ENCODE measurements at regions of chr1 and their contacts with region 1.

Region 1: GRCh38 chr1:12124693-12125421 is 41.9 kb upstream of the TNFRSF1B start:
- H3K4me3 ChIP-seq: no peak overlapping the region
- H3K27ac ChIP-seq: no peak overlapping the region
- H3K4me1 ChIP-seq: no peaks in the 10 kb centered on the region
- CTCF ChIP-seq: peak; percentile 91

Region 2: DNA sequence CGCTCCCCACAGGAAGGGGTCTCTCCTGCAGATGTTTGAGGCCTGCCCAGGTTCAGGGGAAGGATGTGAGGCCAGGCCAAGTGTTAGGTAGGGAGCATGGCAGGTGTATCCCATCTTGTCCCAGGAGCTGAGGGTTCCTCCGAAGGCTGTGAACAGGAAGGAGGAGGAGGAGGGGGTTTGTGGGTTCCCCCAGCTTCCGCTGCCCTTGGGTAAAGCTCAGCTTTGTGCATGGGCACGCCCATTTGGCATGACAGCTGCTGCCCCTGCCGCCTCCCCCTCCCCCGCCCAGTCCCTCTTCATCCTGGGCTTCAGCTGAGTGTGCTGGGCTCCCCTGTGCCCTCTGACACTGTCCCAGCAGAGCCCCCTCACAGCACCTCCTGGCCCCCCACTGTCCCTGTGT is 36.2 kb before region 1 on chr1:
- CTCF ChIA-PET with region 1: no interaction called
- POLR2A ChIA-PET with region 1: no interaction called
- H3K4me3 ChIP-seq: no peak overlapping the region
- H3K27ac ChIP-seq: no peak overlapping the region
- H3K4me1 ChIP-seq: no peaks in the 10 kb centered on the region
- CTCF ChIP-seq: no peak

Region 3: GRCh38 chr1:12141128-12141850 is 16.4 kb after region 1 on chr1:
- CTCF ChIA-PET with region 1: interaction called, 22 read pairs
- POLR2A ChIA-PET with region 1: no interaction called
- H3K4me3 ChIP-seq: no peak overlapping the region
- H3K27ac ChIP-seq: no peak overlapping the region
- H3K4me1 ChIP-seq: peaks cover 6% of the 10 kb centered on the region; the same call in 1 of the 2 replicates
- CTCF ChIP-seq: no peak

Region 4: DNA sequence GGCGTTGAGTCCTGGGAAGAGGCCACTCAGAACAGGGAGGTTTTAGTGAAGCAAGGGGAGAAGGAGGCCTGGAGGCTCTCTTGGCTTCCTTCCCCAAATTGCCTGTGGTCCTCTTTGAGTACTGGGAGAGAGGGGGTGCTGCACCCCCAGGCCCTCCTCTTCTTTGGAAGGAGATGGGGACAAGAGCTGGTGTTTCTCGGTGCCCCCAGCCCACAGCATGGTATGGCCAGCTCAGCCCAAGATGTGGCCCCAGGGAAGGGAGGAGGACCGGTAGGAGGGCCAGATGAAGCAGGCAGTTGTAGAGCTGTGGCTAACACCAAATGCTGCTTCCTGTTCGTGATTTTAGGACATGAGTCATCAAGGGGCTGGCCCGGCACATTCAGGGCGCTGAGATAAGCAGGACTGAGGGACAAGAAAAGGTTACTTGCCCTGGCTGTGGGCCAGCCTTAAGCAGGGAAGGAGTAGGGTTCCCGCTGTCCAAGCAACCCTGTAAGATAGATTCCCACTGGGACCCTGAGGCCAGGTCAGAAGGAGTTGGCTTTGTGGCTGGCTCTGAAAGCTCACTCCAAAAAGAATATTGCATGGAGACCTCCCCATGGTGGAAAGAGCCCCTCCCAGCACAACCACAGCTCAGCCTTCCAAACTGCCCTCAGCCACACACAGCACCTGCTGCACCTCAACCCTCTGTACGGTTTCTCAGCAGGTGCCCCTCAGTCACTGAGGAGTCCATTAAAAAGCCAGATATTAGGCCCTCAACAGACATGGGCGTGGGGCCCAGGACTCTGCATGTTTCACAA is 37.0 kb after region 1 on chr1:
- CTCF ChIA-PET with region 1: interaction called, 15 read pairs
- POLR2A ChIA-PET with region 1: no interaction called
- H3K4me3 ChIP-seq: no peak overlapping the region
- H3K27ac ChIP-seq: no peak overlapping the region
- H3K4me1 ChIP-seq: no peaks in the 10 kb centered on the region
- CTCF ChIP-seq: no peak

Region 5: GRCh38 chr1:12196641-12197482 is 72.0 kb after region 1 on chr1:
- CTCF ChIA-PET with region 1: interaction called, 57 read pairs
- POLR2A ChIA-PET with region 1: no interaction called
- H3K4me3 ChIP-seq: no peak overlapping the region
- H3K27ac ChIP-seq: no peak overlapping the region
- H3K4me1 ChIP-seq: no peaks in the 10 kb centered on the region
- CTCF ChIP-seq: peak; percentile 42

Region 6: DNA sequence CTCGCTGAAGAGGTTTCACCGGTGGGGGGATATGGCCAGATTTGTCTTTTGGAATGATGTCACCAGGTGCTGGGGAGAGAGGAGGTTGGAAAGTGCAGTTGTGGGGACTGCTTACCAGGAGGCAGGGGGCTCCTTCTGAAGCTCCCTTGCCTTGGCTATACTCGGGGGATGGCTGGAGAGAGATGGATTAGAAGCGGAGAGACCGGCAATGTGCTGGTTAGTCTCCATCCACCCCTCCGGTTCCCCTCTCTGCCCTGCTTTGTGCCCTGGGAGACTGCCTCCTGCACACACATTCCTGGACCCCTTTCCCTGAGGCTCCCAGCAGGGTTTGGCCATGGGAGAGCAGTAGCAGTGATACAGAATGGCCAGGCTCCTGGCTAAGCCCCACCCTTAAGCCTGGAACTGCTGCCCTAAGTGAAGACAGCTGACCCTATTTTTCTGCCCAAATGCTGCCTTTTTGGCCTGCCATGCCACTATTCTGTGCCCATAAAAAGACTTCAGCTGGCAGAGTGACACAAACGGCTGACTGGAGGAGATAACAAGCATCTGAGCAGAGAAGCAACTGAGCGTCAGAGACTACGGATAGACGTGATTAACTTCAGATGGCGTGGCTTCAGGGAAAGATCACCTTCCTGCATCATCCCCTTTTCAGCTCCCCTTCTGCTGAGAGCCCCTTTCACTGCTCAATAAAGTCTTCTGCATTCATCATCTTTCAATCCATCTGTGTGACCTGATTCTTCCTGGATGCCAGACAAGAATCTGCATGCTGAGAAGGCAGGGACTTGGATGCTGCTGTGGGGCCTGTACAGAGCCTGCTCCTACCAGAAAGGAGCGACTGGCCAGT is 90.5 kb after region 1 on chr1:
- CTCF ChIA-PET with region 1: interaction called, 300 read pairs
- POLR2A ChIA-PET with region 1: no interaction called
- H3K4me3 ChIP-seq: no peak overlapping the region
- H3K27ac ChIP-seq: no peak overlapping the region
- H3K4me1 ChIP-seq: no peaks in the 10 kb centered on the region
- CTCF ChIP-seq: no peak

Region 7: DNA sequence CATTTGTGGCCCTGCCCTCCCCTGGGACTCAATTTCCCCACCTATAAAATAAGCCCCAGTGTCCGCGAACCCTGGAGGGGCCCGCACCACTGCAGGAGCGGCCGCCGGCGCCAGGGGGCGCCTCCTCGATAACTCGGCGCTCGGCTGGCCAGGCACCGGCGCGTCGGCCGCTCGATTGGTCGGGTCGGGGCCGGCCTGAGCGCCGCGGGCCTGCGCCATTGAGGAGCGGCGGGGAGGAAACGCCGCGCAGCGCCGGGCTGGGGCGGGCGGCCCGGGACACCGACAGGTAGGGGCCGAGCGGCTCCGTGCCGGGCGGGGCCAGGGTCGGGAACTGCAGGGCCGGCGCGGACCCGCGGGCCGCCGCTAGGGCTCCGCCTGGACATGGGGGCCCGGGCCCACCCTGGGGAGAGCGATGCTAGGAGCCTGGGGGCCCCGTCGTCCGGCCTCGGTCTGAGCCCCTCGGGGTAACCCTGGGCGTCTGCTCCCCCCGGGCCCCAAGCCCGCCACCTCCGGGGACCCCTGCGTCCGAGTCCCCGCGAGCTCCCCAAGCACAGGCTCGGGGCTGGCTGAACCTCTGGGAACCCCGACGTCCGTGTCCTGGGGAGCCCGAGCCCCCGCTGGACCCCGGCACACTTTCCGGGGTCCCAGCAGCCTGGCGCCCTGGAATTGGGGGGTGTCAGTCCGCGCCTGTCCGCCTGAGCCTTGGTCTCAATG is 105.1 kb after region 1 on chr1 and contains the start of gene VPS13D:
- CTCF ChIA-PET with region 1: interaction called, 10 read pairs
- POLR2A ChIA-PET with region 1: no interaction called
- H3K4me3 ChIP-seq: peak within 1 kb of the TSS; percentile 87
- H3K27ac ChIP-seq: peak within 1 kb of the TSS; percentile 48; the same call in 1 of the 2 replicates
- H3K4me1 ChIP-seq: 0 out of 2 replicates have a peak, but pooled peaks cover 3% of the 10 kb centered on the region
- CTCF ChIP-seq: peak; percentile 70; the same call in 1 of the 2 replicates

Region 8: GRCh38 chr1:12386130-12386529 is 261.3 kb after region 1 on chr1:
- CTCF ChIA-PET with region 1: no interaction called
- POLR2A ChIA-PET with region 1: no interaction called
- H3K4me3 ChIP-seq: no peak overlapping the region
- H3K27ac ChIP-seq: no peak overlapping the region
- H3K4me1 ChIP-seq: no peaks in the 10 kb centered on the region
- CTCF ChIP-seq: no peak

Measured in HEK293 (cell line).